ENCODE measurements at regions of chr6 and their contacts with region 1.

Region 1: GRCh38 chr6:24581084-24581669 is 64.8 kb downstream of the KIAA0319 start:
- DNase-seq: peak; percentile 89
- ATAC-seq: peak; percentile 94
- H3K4me3 Mint-ChIP-seq: no peak overlapping the region
- H3K27ac Mint-ChIP-seq: no peak overlapping the region
- H3K4me1 Mint-ChIP-seq: peaks cover 3% of the 10 kb centered on the region
- H3K27me3 Mint-ChIP-seq: no peaks in the 10 kb centered on the region

Region 2: GRCh38 chr6:24313251-24314141 is 267.7 kb before region 1 on chr6:
- CTCF ChIA-PET with region 1: no interaction called
- POLR2A ChIA-PET with region 1: no interaction called
- intact Hi-C with region 1: no loop called
- DNase-seq: no peak
- ATAC-seq: no peak
- H3K4me3 Mint-ChIP-seq: no peak overlapping the region
- H3K27ac Mint-ChIP-seq: no peak overlapping the region
- H3K4me1 Mint-ChIP-seq: no peaks in the 10 kb centered on the region
- H3K27me3 Mint-ChIP-seq: peaks cover 28% of the 10 kb centered on the region

Region 3: GRCh38 chr6:24568683-24569082 is 12.5 kb before region 1 on chr6:
- CTCF ChIA-PET with region 1: interaction called, 30 read pairs
- POLR2A ChIA-PET with region 1: no interaction called
- intact Hi-C with region 1: no loop called
- DNase-seq: no peak
- ATAC-seq: no peak
- H3K4me3 Mint-ChIP-seq: no peak overlapping the region
- H3K27ac Mint-ChIP-seq: no peak overlapping the region
- H3K4me1 Mint-ChIP-seq: no peaks in the 10 kb centered on the region
- H3K27me3 Mint-ChIP-seq: no peaks in the 10 kb centered on the region

Region 4: DNA sequence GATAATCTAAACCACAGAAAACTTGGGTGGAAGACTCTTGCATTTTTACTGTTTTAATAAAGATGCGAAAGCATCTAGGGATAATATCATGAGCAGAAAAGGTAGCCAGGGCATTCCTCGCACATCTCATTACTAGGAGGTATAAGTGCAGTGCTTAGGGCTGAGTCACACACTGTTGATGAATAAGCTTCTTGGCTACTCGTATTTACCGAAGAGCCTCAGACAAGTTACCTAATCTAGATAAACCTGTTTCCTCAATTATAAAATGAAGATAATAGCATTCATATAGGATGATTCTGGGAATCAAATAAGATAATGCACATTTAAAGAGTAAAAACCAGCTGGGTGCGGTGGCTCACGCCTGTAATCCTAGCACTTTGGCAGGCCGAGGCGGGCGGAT is 65.6 kb after region 1 on chr6:
- CTCF ChIA-PET with region 1: interaction called, 8 read pairs
- POLR2A ChIA-PET with region 1: no interaction called
- intact Hi-C with region 1: loop called in 1 of 2 experiments (anchors 2 kb)
- DNase-seq: no peak
- ATAC-seq: peak; percentile 24
- H3K4me3 Mint-ChIP-seq: peak overlapping the region; percentile 78
- H3K27ac Mint-ChIP-seq: peak overlapping the region; percentile 19
- H3K4me1 Mint-ChIP-seq: peaks cover 14% of the 10 kb centered on the region
- H3K27me3 Mint-ChIP-seq: peaks cover 11% of the 10 kb centered on the region

Region 5: GRCh38 chr6:24689964-24690363 is 108.8 kb after region 1 on chr6:
- CTCF ChIA-PET with region 1: interaction called, 79 read pairs
- POLR2A ChIA-PET with region 1: no interaction called
- intact Hi-C with region 1: loop called (anchors 1 kb)
- DNase-seq: no peak
- ATAC-seq: no peak
- H3K4me3 Mint-ChIP-seq: no peak overlapping the region
- H3K27ac Mint-ChIP-seq: no peak overlapping the region
- H3K4me1 Mint-ChIP-seq: peaks cover 26% of the 10 kb centered on the region
- H3K27me3 Mint-ChIP-seq: no peaks in the 10 kb centered on the region

Region 6: DNA sequence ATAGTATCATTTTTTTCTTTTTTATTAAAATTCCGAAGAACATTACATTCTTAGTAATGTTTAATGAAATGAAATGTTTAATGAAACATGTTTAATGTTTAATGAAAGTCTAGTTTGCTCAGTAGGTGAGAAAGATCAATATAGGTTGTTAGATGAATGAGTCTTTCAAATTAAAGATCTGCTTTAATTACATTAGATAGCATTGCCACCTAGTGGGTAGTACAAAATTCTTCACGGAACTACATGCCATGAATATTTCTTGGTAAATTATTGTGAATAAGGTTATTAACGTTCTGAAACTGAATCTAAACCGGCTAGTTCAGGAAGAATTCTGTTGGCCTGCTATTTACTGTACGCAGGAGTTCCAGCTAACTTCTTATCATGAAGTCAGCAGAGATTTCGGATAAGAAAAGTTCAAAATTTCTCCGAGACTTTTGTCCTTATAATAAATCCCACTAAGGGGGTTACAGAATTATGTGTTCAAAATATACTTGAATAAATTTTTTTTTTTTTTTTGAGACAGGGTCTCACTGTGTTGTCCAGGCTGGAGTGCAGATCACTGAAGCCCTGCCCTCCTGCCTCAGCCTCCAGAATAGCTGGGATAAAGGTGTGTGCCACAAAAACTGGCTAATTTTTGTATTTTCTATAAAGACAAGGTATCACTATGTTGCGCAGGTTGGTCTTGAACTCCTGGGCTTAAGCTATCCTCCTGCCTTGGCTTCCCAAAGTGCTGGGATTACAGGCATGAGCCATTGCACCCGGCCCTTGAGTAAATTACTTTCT is 185.7 kb after region 1 on chr6:
- CTCF ChIA-PET with region 1: interaction called, 71 read pairs
- POLR2A ChIA-PET with region 1: no interaction called
- intact Hi-C with region 1: loop called (anchors 1 kb)
- DNase-seq: no peak
- ATAC-seq: peak; percentile 76
- H3K4me3 Mint-ChIP-seq: no peak overlapping the region
- H3K27ac Mint-ChIP-seq: no peak overlapping the region
- H3K4me1 Mint-ChIP-seq: no peaks in the 10 kb centered on the region
- H3K27me3 Mint-ChIP-seq: no peaks in the 10 kb centered on the region

Region 7: DNA sequence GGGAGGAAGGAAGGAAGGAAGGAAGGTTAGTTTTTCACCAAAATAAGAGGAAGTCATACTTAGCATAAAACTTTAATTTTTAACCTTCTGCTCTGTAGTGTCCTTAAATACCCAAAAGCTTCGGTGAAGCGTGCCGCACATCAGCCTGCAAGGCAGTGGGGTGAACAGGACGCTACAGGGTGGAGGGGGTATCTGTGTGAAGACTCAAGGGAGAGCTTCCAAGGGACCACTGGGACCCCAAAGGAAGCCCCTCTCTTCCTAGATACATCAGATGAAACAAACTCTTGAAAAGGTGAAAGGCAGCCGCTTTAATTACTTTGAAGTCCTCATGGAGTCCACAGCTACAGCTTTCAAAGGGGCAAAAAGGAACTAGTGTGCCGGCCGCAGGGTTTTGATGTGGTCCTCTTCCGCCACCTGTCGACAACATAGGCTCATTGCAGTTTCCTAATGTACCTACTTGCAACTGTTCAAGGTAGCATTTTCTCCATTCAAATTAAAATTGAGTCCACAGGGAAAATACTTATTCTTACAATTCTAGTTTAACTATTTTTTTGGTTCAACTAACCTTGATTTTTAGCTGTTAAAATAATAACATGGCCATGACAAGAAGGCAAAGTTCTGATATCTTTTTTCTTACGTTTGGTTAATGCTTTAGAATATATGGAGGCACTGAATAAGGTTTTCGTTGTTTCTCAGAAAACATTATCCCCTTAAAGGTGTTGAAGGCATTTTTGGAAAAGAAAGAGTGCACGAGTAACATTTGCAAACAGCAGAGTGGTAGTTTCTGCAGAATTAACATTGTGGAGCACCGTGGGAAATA is 489.6 kb after region 1 on chr6:
- CTCF ChIA-PET with region 1: interaction called, 3 read pairs
- POLR2A ChIA-PET with region 1: no interaction called
- intact Hi-C with region 1: loop called (anchors 1 to 5 kb)
- DNase-seq: peak; percentile 88
- ATAC-seq: peak; percentile 94
- H3K4me3 Mint-ChIP-seq: no peak overlapping the region
- H3K27ac Mint-ChIP-seq: peak overlapping the region; percentile 47
- H3K4me1 Mint-ChIP-seq: peaks cover 4% of the 10 kb centered on the region
- H3K27me3 Mint-ChIP-seq: no peaks in the 10 kb centered on the region

Measured in activated CD4-positive, alpha-beta T cell treated with anti-CD3 and anti-CD28 coated beads for 36 hours (primary cell).